Tibial artery (tissue), 4 donors: ENCODE measurements at regions of chr7 and their contacts with region 1.

Region 1: DNA sequence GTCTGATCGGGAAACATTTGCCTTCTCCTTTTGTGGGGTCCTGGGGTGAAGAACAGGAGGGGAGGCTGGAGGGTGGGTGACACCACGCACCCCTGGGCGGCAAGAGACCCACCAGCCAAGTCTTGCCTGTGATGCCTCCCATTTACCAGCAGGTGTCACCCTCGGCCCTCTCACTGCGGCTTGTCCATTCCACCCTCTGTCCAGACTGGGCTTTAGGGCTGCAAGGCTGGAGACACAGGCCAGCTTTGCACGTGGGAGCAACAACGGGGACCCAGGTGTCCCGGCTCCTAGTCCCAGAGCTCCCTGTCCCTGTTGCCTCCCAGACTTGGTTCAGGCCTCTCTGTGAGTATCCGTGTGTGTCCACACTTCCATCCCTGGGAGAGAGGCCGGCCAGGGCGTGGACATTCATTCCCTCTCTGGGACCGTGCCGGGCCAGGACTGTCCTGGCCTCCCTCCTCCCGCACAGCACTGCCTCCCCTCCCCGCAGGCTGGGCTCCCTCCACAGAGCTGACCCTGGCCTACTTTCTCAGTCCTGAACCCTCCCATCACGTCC is 36.2 kb upstream of the GTF2IRD1 start:
- DNase-seq: peak; percentile 44 to 80
- H3K4me3 ChIP-seq: no peak overlapping the region
- H3K27ac ChIP-seq: no peak overlapping the region
- H3K4me1 ChIP-seq: peaks cover 0 to 7% (median 3%) of the 10 kb centered on the region in 4 donors
- H3K27me3 ChIP-seq: no peaks in the 10 kb centered on the region
- CTCF ChIP-seq: peak; percentile 97 to 98

Region 2: DNA sequence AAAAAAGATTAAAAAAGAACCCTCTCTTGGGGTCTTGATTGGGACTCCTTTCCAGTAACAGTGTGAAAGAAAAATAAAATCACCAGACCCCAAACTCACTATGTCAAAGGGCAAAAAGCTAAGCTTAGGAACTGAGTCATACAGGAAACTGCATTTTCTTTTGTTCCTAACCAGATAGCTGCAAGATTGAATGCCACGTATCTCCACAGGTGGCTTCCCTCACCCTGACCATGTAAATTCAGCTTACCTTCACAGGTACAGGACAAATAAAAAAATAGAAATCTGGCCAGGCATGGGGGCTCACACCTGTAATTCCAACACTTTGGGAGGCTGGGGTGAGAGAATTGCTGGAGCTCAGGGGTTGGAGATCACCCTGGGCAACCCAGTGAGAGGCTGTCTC is 275.8 kb before region 1 on chr7:
- intact Hi-C with region 1: no loop called
- DNase-seq: no peak
- H3K4me3 ChIP-seq: no peak overlapping the region
- H3K27ac ChIP-seq: no peak overlapping the region
- H3K4me1 ChIP-seq: no peaks in the 10 kb centered on the region
- H3K27me3 ChIP-seq: no peaks in the 10 kb centered on the region
- CTCF ChIP-seq: no peak

Region 3: DNA sequence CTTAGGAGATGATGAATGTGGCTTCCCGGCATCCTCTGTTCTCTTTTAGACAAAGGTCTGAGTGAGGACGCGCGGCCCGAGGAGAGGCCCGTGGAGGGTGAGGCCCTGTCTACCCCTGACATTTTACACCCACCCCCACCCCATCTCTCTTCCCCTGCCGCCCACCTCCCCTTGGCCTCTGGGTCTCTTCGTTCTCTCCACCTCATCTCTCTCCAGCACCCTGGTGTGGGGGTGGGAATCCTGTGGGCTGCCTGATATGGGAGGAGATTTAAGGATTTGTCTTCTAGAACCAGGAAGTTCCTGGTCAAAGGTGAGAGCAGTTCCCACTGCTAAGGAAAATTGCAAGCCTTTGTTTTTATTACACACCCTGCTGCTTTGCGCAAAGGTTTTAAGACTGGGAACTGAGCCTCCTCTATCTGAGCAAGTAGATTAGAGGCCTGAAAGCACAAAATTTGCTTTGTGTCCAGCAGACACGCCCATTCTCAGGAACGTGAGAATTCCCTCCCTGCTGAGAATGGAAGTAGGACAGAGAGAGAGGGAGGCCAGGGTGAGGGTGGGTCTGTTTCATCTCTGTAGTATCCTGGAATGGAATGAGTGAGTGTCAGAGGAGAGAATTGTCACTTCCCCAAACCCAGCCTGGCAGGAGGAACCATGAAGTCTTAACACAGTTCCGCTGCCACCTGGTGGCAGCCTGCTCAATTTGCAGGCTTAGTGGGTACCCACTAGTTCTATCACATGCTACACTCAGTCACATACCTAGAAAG is 127.4 kb after region 1 on chr7:
- intact Hi-C with region 1: loop called (anchors 5 kb)
- DNase-seq: no peak
- H3K4me3 ChIP-seq: no peak overlapping the region
- H3K27ac ChIP-seq: no peak overlapping the region
- H3K4me1 ChIP-seq: peaks cover 0 to 4% (median 0%) of the 10 kb centered on the region in 4 donors
- H3K27me3 ChIP-seq: no peaks in the 10 kb centered on the region
- CTCF ChIP-seq: peak; percentile 42 to 54